SK-N-SH (cell line): ENCODE measurements at regions of chr3 and their contacts with region 1.

Region 1: DNA sequence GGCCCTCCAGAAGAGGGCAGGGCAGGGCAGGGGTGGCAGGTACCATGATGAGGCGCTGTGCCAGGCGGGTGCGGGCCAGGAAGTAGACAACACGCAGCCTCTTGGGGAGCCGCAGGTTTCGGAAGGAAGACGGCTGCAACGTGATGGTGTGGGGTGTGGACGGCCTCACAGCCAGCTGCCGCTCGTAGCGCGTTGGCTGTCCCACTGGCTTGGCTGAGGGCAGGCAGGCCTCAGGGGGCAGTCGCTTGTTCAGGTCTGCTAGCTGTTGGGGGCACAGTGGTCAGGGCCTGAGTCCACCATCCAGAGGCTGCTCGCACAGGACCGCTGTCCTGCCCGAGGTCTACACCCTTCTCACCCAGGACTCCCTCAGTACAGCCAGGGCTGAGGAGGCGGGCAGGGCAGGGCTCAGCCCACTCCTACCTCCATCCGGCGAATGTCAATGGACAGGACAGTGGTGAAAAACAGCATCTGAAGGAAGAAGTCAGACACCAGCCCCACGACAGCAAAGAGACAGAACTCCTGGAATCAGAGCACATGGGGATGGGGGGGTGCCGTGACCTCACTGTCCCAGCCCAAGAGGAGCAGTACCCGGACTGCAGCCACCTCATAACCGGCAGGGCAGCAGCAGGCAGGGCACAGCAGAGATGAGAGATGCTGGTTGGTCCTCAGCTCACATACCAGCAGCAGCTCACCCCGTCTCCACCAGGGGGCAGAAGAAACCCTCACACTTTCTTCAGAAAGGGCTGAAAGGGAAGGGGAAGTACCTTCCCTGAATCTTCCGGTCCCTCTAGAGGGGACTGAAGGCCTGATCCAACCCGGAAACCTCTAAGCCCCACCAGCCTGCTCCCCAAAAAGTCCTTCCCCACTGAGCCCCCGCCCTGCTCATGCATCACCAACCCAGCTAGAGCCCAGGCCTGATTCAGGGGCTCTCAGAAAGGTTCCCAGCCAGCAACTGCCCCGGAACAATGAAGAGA is 40.0 kb downstream of the PTPN23 start:
- DNase-seq: peak; percentile 90
- H3K4me3 ChIP-seq: no peak overlapping the region; a peak in 1 of 4 replicates
- H3K27ac ChIP-seq: peak overlapping the region; percentile 62 to 90
- H3K4me1 ChIP-seq: peaks cover 0 to 24% of the 10 kb centered on the region in 2 experiments; a peak in 1 of 4 replicates
- H3K27me3 ChIP-seq: no peaks in the 10 kb centered on the region
- CTCF ChIP-seq: peak; percentile 89
- EP300 ChIP-seq: no peak
- RAD21 ChIP-seq: peak; percentile 82

Region 2: GRCh38 chr3:47394140-47394870 is 26.5 kb before region 1 on chr3:
- CTCF ChIA-PET with region 1: interaction called, 10 read pairs
- POLR2A ChIA-PET with region 1: interaction called, 3 read pairs
- DNase-seq: peak; percentile 41
- H3K4me3 ChIP-seq: no peak overlapping the region
- H3K27ac ChIP-seq: no peak overlapping the region
- H3K4me1 ChIP-seq: peaks cover 11 to 18% of the 10 kb centered on the region in 2 experiments; a peak in 2 of 4 replicates
- H3K27me3 ChIP-seq: no peaks in the 10 kb centered on the region
- CTCF ChIP-seq: 0 out of 2 replicates have a peak, but pooled peaks have one; percentile 11
- EP300 ChIP-seq: no peak
- RAD21 ChIP-seq: no peak

Region 3: DNA sequence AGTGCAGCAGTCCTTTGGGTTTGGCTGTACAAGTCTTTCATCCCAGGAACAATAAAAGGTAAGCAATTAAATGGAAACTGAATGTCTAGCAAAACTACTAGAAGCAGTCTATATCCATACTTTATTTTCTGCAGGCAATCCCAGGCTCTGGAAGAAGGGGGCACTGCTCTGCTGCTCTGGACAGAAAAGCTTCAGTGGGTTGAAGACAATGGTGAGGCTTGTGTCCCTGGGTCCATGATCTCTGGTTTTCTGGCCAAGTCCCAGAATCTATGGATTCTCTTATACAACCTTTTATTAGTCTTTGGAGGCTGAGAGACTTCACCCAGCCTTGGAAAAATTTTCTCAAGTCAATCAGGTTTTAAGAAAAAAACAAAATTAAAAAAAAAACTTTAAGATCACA is 19.3 kb after region 1 on chr3:
- CTCF ChIA-PET with region 1: interaction called, 16 read pairs
- POLR2A ChIA-PET with region 1: no interaction called
- DNase-seq: no peak
- H3K4me3 ChIP-seq: no peak overlapping the region
- H3K27ac ChIP-seq: no peak overlapping the region
- H3K4me1 ChIP-seq: no peaks in the 10 kb centered on the region; a peak in 1 of 4 replicates
- H3K27me3 ChIP-seq: no peaks in the 10 kb centered on the region
- CTCF ChIP-seq: peak; percentile 25
- EP300 ChIP-seq: no peak
- RAD21 ChIP-seq: peak; percentile 46

Region 4: DNA sequence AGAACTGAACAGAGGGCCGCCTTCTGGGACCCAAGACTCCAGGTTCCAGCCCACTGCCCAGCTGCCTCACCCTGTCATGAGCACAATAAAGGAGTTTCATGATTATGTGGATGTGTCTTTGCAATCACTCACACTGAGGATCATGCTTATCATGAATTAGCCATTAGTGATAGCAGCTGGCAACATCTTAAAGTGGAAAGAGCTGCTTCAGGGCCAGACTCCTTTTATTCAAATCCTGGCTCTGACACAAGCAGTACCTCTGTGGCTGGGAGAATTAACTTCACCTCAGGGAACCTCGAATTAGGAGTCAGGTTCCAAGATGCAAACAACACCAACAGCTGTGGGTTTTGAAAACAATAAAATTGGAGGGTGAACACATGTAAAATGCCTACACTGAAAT is 61.6 kb after region 1 on chr3:
- CTCF ChIA-PET with region 1: interaction called, 64 read pairs
- POLR2A ChIA-PET with region 1: no interaction called
- DNase-seq: no peak
- H3K4me3 ChIP-seq: no peak overlapping the region
- H3K27ac ChIP-seq: no peak overlapping the region; a peak in 1 of 4 replicates
- H3K4me1 ChIP-seq: no peaks in the 10 kb centered on the region
- H3K27me3 ChIP-seq: no peaks in the 10 kb centered on the region
- CTCF ChIP-seq: no peak
- EP300 ChIP-seq: no peak
- RAD21 ChIP-seq: no peak

Region 5: GRCh38 chr3:47731061-47731460 is 310.3 kb after region 1 on chr3:
- CTCF ChIA-PET with region 1: no interaction called
- POLR2A ChIA-PET with region 1: no interaction called
- DNase-seq: no peak
- H3K4me3 ChIP-seq: no peak overlapping the region
- H3K27ac ChIP-seq: no peak overlapping the region
- H3K4me1 ChIP-seq: no peaks in the 10 kb centered on the region
- H3K27me3 ChIP-seq: no peaks in the 10 kb centered on the region
- CTCF ChIP-seq: no peak
- EP300 ChIP-seq: no peak
- RAD21 ChIP-seq: no peak